CD4-positive, alpha-beta T cell (primary cell): ENCODE measurements at regions of chr6 and their contacts with region 1.

Region 1: DNA sequence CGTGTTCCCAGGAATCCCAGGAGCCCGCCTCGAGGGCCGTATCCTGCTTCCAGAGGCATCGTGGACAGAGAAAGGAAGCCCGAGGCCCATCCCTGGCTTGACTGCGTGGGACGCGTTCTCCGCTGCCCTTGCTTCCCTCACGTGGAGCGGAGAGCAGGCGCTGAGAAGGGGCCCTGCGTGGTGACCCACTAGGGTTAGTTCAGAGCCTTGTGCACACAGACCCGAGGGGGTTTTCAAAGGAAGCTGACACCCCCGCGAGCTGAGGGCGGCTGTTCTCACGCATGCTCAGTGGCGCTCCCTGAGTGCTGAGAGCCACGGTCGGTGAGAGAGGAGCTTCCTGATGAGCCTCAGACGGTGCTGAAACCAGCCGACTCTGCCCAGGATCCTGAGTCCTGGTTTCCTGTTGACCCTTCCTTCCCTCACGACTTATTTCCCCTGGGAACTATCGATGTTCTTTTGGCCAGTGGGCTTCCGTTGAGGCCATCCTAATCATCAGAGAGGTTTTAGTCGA is 28.9 kb upstream of the CCR6 start:
- DNase-seq: peak; percentile 34 to 91 (median 58)
- ATAC-seq: peak; percentile 45
- H3K4me3 ChIP-seq: peak overlapping the region; percentile 44
- H3K4me3 Mint-ChIP-seq: peak overlapping the region; percentile 72
- H3K27ac ChIP-seq: peak overlapping the region in 1 of 2 donors; percentile 27
- H3K27ac Mint-ChIP-seq: peak overlapping the region; percentile 74
- H3K4me1 ChIP-seq: peaks cover 74% of the 10 kb centered on the region
- H3K4me1 Mint-ChIP-seq: peaks cover 75% of the 10 kb centered on the region
- H3K27me3 ChIP-seq: no peaks in the 10 kb centered on the region
- H3K27me3 Mint-ChIP-seq: no peaks in the 10 kb centered on the region
- CTCF ChIP-seq: no peak

Region 2: DNA sequence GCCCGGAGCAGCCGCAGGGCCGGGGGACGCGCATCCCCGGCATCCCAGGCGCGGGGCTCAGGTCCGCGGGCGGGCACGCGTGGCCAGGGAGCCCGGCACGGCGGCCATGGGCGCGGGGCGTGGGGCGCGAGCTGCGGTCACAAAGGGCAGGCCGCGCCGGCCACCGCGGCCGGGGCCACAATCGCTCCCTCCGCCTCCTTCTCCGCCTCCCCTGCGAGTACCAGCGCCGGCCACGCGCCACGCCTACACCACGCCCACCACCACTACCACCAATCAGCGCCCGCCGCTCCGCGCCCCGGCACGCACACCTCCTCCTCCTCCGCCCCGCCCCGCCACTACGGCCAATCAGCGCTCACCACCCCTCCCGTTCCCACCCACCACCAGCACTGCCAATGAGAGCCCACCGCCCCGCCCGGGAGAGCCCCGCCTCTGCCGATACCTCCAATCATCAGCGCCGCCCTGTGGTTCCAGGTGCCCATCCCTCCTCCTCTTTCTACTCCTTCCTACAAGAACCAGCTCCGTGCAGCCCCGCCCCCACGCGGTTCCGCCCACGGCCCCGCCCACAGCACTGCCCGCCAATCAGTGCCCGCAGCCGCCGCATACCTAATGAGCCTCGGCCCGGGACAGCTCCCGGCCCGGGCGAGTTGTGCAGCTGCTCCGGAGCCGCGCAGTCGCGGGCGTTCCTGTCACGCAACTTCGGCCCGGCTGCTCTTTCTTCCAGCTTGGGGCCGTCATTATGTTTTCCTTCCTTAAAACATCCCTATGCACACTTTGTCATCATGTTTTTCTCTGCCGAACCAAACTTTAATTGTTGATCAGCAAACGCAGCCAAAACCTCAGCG is 466.7 kb before region 1 on chr6 and contains the start of gene RPS6KA2:
- CTCF ChIA-PET with region 1: no interaction called
- POLR2A ChIA-PET with region 1: no interaction called
- intact Hi-C with region 1: no loop called
- DNase-seq: peak; percentile 100
- ATAC-seq: peak; percentile 92
- H3K4me3 ChIP-seq: peak within 1 kb of the TSS; percentile 78
- H3K4me3 Mint-ChIP-seq: peak within 1 kb of the TSS; percentile 91
- H3K27ac ChIP-seq: peak within 1 kb of the TSS in 1 of 2 donors; percentile 64
- H3K27ac Mint-ChIP-seq: peak within 1 kb of the TSS; percentile 92
- H3K4me1 ChIP-seq: peaks cover 24% of the 10 kb centered on the region
- H3K4me1 Mint-ChIP-seq: peaks cover 31% of the 10 kb centered on the region
- H3K27me3 ChIP-seq: peaks cover 4 to 20% of the 10 kb centered on the region in 2 experiments
- H3K27me3 Mint-ChIP-seq: peaks cover 29% of the 10 kb centered on the region
- CTCF ChIP-seq: no peak
- total RNA-seq, gene RPS6KA2: 5.6 to 6.2 TPM

Region 3: DNA sequence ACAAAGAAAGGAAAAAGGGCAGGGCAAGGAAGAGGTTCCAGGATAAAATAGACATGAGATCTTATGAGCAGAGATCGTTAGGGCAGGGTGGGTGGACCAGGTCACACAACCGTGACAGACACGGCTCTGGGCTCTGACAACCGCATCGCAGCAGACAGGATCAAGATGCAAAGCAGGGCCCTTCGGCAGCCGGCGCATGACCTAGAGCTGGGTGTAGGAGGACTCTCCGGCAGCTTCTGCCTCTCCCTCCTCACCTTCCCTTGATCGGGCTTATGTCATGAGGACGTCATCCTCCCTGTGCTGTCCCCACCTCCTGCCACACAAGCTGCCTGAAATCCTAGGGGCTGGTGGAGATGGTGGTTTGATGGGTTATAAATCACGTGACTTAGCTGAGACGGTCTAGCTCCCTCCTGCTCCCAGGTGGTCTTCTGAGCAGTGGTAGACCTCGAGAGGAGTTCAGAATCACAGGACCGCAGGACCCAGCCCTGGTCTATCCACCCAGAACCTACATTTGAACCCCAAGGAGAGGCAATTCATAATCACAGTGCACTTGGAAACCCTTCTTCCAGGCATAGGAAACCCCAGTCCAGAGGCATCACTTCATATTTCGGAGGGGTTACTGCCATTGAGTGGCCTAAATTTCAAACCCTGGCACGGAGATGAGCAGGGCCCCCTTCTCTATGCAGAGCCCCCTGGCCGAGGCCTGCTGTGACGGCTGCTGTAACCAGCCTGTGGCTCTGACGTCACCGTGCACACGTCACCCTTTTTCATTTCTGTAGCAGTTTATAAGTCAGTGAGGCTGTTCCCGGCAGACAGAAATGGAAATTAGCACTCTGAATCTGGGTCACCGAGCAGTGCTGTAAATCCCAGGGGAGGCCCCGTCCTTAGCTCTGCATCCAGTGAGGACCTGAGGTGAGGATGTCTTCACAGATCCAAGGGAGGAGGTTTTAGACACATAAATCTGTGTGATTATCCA is 20.2 kb after region 1 on chr6:
- CTCF ChIA-PET with region 1: interaction called, 4 read pairs
- POLR2A ChIA-PET with region 1: interaction called, 9 read pairs
- intact Hi-C with region 1: loop called in 1 of 2 experiments (anchors 2 kb)
- DNase-seq: peak in 11 of 14 experiments; percentile 30 to 90 (median 53)
- ATAC-seq: peak; percentile 79
- H3K4me3 ChIP-seq: peak overlapping the region; percentile 55
- H3K4me3 Mint-ChIP-seq: peak overlapping the region; percentile 97
- H3K27ac ChIP-seq: peak overlapping the region; percentile 58 to 82
- H3K27ac Mint-ChIP-seq: peak overlapping the region; percentile 95
- H3K4me1 ChIP-seq: peaks cover 68% of the 10 kb centered on the region
- H3K4me1 Mint-ChIP-seq: peaks cover 58% of the 10 kb centered on the region
- H3K27me3 ChIP-seq: no peaks in the 10 kb centered on the region
- H3K27me3 Mint-ChIP-seq: no peaks in the 10 kb centered on the region
- CTCF ChIP-seq: no peak

Region 4: DNA sequence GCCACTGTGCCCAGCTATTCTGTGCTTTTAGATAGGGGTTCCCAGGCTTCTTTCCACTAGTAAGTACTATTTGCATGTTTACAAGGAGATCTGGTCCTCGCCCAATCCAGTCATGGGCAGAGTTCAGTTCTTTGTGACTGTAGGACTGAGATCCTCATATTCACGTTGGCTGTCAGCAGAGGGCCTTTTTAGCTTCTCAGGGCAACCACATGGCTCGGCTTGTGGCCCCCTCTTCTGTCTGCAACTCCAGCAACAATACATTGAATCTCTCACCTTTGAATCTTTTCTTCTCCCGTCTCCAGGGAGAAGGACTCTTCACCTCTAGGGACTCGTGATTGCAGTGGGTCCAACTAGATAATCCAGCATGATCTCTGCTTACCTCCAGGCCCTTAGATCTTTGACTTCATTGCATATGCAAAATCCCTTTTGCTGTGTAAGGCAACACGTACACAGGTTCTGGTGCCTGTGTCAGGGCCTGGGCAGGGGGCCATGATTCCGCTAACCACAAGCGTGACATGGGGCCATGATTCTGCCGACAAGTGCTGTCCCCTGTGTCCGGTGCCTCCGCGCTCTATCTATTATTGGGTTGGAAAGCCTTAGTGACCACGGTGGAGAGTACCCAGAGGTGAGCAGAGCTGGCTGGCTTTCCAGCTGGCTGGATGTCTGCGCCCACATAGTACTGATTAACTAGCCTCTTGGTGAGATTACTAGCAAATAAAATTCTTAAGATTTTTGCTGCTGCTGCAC is 34.0 kb after region 1 on chr6:
- CTCF ChIA-PET with region 1: no interaction called
- POLR2A ChIA-PET with region 1: interaction called, 7 read pairs
- intact Hi-C with region 1: loop called in 1 of 2 experiments (anchors 5 kb)
- DNase-seq: no peak
- ATAC-seq: no peak
- H3K4me3 ChIP-seq: no peak overlapping the region
- H3K4me3 Mint-ChIP-seq: no peak overlapping the region
- H3K27ac ChIP-seq: no peak overlapping the region
- H3K27ac Mint-ChIP-seq: no peak overlapping the region
- H3K4me1 ChIP-seq: peaks cover 68% of the 10 kb centered on the region
- H3K4me1 Mint-ChIP-seq: peaks cover 38% of the 10 kb centered on the region
- H3K27me3 ChIP-seq: no peaks in the 10 kb centered on the region
- H3K27me3 Mint-ChIP-seq: no peaks in the 10 kb centered on the region
- CTCF ChIP-seq: no peak